Activated CD8-positive, alpha-beta memory T cell treated with anti-CD3 and anti-CD28 coated beads, Interleukin-2, amount 10 ng/mL, durations not matched to agents 7 days and 5 days (primary cell): ENCODE measurements at regions of chr15 and their contacts with region 1.

Region 1: DNA sequence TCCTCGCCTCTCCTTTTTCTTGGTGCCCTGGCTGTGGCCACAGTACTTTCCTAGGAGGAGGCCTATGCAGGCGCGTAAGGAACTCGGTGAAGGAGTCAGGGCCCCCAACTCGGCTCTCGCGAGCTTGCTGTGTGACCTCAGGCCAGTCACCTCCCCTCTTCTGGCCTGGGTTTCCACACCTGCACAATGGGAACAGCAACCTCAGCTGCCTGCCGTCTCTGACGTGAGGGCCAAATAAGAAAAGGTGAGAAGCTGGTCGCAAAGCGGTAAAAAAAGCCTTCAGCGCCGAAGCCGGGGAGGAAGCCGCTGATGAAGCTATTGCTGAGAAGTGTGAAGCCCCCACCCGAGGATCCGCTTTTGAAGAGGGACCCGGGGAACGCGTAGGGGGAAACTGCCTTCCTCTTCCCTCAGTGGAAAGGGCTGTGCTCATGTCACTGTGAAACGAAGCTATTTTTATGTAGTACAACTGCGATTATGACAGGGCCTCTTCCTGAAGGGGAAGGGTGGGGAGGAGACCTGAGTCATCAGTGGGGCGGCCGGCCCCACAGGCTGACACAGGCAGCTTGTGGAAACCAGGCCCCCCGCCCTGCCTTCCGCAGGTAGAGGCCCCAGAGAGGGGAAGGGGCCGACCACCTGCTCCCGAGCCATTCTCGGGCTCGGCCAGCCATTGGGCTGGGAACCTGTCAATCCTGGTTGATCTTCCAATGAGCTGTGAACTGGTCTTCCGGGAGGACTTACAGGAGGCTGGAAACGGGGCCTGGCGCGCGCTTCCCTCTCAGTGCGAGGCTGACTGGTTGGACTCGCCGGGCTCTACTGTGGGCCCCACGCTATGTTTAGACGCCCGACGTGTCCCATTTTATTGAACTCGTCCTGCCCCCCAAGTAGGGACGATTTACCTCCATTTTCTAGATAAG is 18.0 kb upstream of the ANKDD1A start:
- DNase-seq: peak; percentile 99
- ATAC-seq: peak; percentile 79
- H3K4me3 Mint-ChIP-seq: peak overlapping the region; percentile 83
- H3K27ac Mint-ChIP-seq: peak overlapping the region; percentile 99
- H3K4me1 Mint-ChIP-seq: peaks cover 63% of the 10 kb centered on the region
- H3K27me3 Mint-ChIP-seq: no peaks in the 10 kb centered on the region

Region 2: GRCh38 chr15:64809649-64810496 is 83.9 kb before region 1 on chr15:
- CTCF ChIA-PET with region 1: interaction called, 12 read pairs
- DNase-seq: peak; percentile 83
- ATAC-seq: peak; percentile 79
- H3K4me3 Mint-ChIP-seq: no peak overlapping the region
- H3K27ac Mint-ChIP-seq: no peak overlapping the region
- H3K4me1 Mint-ChIP-seq: peaks cover 2% of the 10 kb centered on the region
- H3K27me3 Mint-ChIP-seq: peaks cover 3% of the 10 kb centered on the region

Region 3: GRCh38 chr15:64836023-64836536 is 57.7 kb before region 1 on chr15:
- CTCF ChIA-PET with region 1: interaction called, 96 read pairs
- DNase-seq: no peak
- ATAC-seq: no peak
- H3K4me3 Mint-ChIP-seq: peak overlapping the region; percentile 42
- H3K27ac Mint-ChIP-seq: peak overlapping the region; percentile 63
- H3K4me1 Mint-ChIP-seq: peaks cover 46% of the 10 kb centered on the region
- H3K27me3 Mint-ChIP-seq: no peaks in the 10 kb centered on the region

Region 4: DNA sequence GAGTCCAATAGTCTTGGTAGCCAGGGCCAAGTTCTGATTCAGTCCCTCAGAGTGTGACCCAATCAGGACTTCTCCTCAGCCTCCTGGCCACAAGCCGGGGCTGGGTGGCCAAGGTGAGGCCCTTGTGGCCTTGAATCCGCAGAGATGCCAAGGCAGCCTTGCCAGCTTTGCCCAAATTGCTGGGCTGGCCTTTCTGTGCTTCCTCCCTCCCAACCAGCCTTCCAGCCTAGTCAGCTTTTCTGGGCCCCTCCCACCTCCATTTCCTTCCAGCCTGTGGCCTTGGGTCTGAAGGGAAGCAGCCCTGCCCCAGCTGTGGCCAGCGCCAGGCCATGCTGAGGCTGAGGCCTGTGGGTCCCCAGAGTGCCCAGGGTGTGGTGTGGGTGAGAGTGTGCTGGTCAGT is 16.3 kb before region 1 on chr15:
- CTCF ChIA-PET with region 1: interaction called, 56 read pairs
- DNase-seq: no peak
- ATAC-seq: peak; percentile 61
- H3K4me3 Mint-ChIP-seq: no peak overlapping the region
- H3K27ac Mint-ChIP-seq: peak overlapping the region; percentile 80
- H3K4me1 Mint-ChIP-seq: peaks cover 39% of the 10 kb centered on the region
- H3K27me3 Mint-ChIP-seq: no peaks in the 10 kb centered on the region